Activated CD4-positive, alpha-beta T cell treated with anti-CD3 and anti-CD28 coated beads for 36 hours (primary cell): ENCODE measurements at regions of chr6 and their contacts with region 1.

Region 1: GRCh38 chr6:70673601-70674000 is 5.9 kb downstream of the SMAP1 start:
- DNase-seq: peak; percentile 19
- ATAC-seq: peak; percentile 66
- H3K4me3 Mint-ChIP-seq: no peak overlapping the region
- H3K27ac Mint-ChIP-seq: peak overlapping the region; percentile 19
- H3K4me1 Mint-ChIP-seq: peaks cover 66% of the 10 kb centered on the region
- H3K27me3 Mint-ChIP-seq: no peaks in the 10 kb centered on the region

Region 2: GRCh38 chr6:70616728-70617260 is 56.8 kb before region 1 on chr6:
- CTCF ChIA-PET with region 1: no interaction called
- POLR2A ChIA-PET with region 1: interaction called, 10 read pairs
- intact Hi-C with region 1: no loop called
- DNase-seq: no peak
- ATAC-seq: no peak
- H3K4me3 Mint-ChIP-seq: no peak overlapping the region
- H3K27ac Mint-ChIP-seq: no peak overlapping the region
- H3K4me1 Mint-ChIP-seq: no peaks in the 10 kb centered on the region
- H3K27me3 Mint-ChIP-seq: peaks cover 4% of the 10 kb centered on the region